ENCODE measurements at regions of chr5 and their contacts with region 1.

Region 1: GRCh38 chr5:53069626-53070025 is 39.9 kb downstream of the MOCS2 start:
- DNase-seq: peak; percentile 68
- H3K4me3 Mint-ChIP-seq: no peak overlapping the region
- H3K27ac Mint-ChIP-seq: peak overlapping the region; percentile 14
- H3K4me1 Mint-ChIP-seq: peaks cover 35% of the 10 kb centered on the region
- H3K27me3 Mint-ChIP-seq: peaks cover 8% of the 10 kb centered on the region

Region 2: DNA sequence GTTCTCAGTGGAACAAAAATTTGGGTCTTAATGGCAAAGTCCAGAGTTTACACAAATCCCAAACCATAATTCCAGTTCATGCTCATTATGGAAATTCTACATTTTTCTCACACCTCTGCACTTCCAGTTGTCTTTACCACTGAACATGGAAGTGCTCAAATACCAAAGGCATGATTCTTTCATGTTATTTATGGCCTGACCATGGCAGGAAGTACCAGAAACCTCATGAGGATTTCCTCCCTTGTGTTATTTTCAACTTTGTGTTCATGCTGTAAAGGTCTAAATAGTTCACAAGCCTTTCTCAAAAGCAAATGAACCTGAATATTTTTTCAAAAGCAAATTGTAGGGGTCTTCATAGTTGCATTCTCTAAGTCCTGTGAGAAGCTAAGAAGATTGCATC is 363.9 kb before region 1 on chr5:
- intact Hi-C with region 1: no loop called
- DNase-seq: no peak
- H3K4me3 Mint-ChIP-seq: no peak overlapping the region
- H3K27ac Mint-ChIP-seq: no peak overlapping the region
- H3K4me1 Mint-ChIP-seq: peaks cover 45% of the 10 kb centered on the region
- H3K27me3 Mint-ChIP-seq: peaks cover 8% of the 10 kb centered on the region

Region 3: DNA sequence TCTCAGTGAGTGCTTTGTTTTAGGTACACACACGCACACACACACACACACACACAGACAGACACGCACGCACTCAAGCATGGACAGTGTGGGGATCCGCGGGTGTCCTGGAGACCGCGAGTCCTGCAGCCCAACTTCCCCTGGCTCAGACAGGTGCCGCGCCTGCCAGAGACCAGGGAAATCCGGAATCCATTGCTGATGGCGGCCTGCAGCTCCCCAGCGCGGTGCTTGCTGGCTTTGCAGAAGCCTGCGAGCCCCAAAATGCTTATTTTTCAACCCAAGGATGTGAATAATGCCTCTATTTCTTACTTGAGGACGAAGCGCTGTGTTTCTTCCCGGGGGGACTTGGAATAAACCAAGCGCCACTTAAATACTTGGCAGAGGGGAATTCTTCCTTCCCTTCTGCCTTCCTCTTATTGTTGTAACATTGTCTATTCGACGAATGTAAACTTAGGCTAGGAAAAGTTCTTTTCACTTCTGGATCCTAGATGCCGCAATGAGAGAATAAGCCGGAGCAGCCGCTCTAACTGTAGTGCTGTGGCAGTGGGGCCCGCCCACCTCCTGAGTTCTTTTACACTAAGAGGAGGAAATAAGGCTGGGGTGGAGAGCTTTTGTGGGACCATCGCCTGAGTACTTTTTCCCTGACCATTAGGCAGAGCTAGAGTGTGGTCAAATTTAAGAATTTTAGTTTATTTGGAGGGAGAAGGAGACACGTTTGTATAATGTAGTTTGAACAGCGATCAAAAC is 79.7 kb before region 1 on chr5:
- intact Hi-C with region 1: loop called (anchors 1 kb)
- DNase-seq: peak; percentile 26
- H3K4me3 Mint-ChIP-seq: peak overlapping the region; percentile 75
- H3K27ac Mint-ChIP-seq: no peak overlapping the region
- H3K4me1 Mint-ChIP-seq: peaks cover 29% of the 10 kb centered on the region
- H3K27me3 Mint-ChIP-seq: peaks cover 40% of the 10 kb centered on the region

Region 4: DNA sequence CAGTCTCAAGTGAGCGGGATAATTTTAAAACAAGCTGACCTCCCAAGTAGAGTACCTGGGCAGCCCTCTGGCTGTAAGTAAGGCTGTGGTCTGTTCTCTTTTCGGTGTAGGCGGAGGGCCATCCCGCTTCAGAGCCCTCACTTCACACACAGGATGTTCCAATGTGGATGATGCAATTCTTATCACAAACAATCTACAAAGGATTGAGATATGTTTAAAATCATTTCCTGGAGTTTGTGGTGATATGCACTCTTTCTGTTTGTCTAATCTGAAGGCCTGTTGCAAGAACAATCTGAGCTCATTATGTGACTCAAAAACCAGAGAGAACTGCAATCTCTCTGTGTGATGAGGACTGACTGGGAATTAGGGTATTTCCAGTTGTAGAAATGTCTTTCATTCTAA is 37.9 kb before region 1 on chr5:
- intact Hi-C with region 1: loop called (anchors 5 kb)
- DNase-seq: peak; percentile 50
- H3K4me3 Mint-ChIP-seq: no peak overlapping the region
- H3K27ac Mint-ChIP-seq: peak overlapping the region; percentile 56
- H3K4me1 Mint-ChIP-seq: peaks cover 57% of the 10 kb centered on the region
- H3K27me3 Mint-ChIP-seq: peaks cover 6% of the 10 kb centered on the region

Region 5: GRCh38 chr5:53041071-53041692 is 28.4 kb before region 1 on chr5:
- intact Hi-C with region 1: loop called (anchors 1 kb)
- DNase-seq: peak; percentile 36
- H3K4me3 Mint-ChIP-seq: peak overlapping the region; percentile 15
- H3K27ac Mint-ChIP-seq: peak overlapping the region; percentile 24
- H3K4me1 Mint-ChIP-seq: peaks cover 73% of the 10 kb centered on the region
- H3K27me3 Mint-ChIP-seq: no peaks in the 10 kb centered on the region

Region 6: GRCh38 chr5:53080271-53080670 is 10.6 kb after region 1 on chr5:
- intact Hi-C with region 1: loop called (anchors 1 kb)
- DNase-seq: no peak
- H3K4me3 Mint-ChIP-seq: no peak overlapping the region
- H3K27ac Mint-ChIP-seq: no peak overlapping the region
- H3K4me1 Mint-ChIP-seq: peaks cover 46% of the 10 kb centered on the region
- H3K27me3 Mint-ChIP-seq: peaks cover 6% of the 10 kb centered on the region

Region 7: DNA sequence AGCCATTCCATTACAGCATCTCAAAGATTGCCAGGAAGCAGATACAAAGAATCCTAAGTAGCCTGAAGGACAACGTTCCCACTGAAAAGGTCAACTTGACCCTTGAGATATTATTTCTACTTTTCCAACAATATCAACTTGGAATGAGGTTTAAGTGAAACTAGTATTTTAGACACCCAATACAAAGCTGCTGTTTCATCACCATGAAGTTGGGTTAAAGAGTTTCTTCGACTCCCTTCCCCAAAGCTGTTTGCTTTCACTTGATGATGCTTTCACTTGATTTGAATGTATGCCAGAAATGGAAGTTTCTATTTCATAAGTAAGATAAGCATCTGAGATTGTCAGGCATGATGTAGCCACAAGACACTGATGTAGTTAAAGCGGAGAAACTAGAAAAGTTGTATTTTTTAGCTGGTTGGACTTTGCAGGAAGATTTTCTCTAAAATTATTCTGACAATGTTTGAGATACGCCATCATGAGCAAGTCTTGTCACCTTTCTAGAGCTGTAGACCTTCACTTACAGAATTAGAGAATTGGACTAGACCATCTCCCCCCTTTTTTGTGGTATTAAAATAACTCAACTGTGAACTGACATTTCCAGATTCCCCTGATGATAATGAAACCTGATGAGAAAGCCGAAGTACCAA is 19.8 kb after region 1 on chr5:
- intact Hi-C with region 1: loop called (anchors 1 kb)
- DNase-seq: no peak
- H3K4me3 Mint-ChIP-seq: peak overlapping the region; percentile 59
- H3K27ac Mint-ChIP-seq: peak overlapping the region; percentile 65
- H3K4me1 Mint-ChIP-seq: peaks cover 51% of the 10 kb centered on the region
- H3K27me3 Mint-ChIP-seq: peaks cover 2% of the 10 kb centered on the region

Region 8: DNA sequence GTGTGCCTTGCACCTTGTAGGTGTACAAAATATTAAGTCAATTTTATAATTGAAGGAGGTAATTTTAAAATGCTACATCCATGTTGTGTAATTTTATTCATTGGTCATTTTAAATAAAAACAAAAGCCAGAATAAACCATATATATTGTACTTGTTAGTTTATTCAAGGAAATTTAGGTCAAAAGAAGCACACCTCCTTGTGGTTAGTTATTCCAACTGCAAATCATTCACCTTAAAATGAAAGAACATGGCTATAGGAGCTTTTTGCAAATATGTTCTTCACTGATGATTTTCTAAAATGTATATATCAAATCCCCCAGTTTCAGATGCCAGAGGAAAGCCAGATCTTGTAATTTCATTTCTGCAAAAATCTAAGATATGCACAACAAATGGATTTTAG is 45.4 kb after region 1 on chr5:
- intact Hi-C with region 1: no loop called
- DNase-seq: no peak
- H3K4me3 Mint-ChIP-seq: no peak overlapping the region
- H3K27ac Mint-ChIP-seq: no peak overlapping the region
- H3K4me1 Mint-ChIP-seq: peaks cover 9% of the 10 kb centered on the region
- H3K27me3 Mint-ChIP-seq: peaks cover 11% of the 10 kb centered on the region

Measured in activated T-helper 2 cell treated with anti-CD3 and anti-CD28 coated beads, Interferon-gamma antibody, Interleukin-2, Interleukin-4, amounts not matched to agents 10 μg/mL and 5 μg/mL and 100 μg/mL, durations not matched to agents 14 hours and 24 hours and 36 hours (primary cell).